T-cell (primary cell): ENCODE measurements at regions of chr1 and their contacts with region 1.

Region 1: DNA sequence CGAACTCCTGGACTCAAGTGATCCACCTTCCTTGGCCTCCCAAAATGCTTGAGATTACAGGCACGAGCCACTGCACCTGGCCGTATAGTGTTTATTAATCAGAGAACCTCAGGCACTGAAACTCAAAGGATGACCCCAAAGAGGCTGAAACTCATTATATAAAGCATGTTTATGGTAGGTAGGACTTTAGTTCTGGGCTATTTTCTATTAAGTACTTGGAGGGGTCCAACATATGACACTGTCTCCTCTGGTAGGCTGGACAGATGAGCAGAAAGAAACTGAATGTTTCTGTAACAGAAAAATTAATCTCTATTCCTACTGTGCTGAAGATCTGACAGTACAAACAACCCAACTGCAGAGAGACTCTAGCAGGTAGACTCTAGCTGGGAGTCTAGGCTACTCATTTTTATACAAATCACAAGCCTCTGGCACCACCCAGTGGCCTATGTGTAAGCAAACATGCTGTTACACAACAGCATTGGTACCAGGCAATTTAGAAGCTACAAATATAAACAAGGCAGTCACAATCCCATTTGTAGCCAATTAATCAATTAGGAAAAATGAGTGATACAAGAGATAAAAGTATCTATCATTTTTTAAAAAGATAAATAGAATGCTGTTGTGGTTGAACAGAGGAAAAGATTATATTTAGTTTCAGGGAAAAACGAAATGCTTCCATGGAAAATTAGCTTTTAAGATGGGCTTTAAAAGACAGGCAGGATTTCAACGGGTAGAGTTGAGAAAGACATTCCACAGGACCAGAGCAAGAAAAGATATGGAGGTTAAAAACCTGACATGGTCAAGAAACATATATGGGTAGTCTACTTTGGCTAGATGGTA is 10.4 kb downstream of the DCAF8 start:
- DNase-seq: peak; percentile 6 to 76 (median 55)
- ATAC-seq: peak; percentile 86 to 98 (median 90)
- H3K4me3 ChIP-seq: no peak overlapping the region
- H3K4me3 Mint-ChIP-seq: no peak overlapping the region
- H3K27ac ChIP-seq: no peak overlapping the region
- H3K27ac Mint-ChIP-seq: peak overlapping the region; percentile 3 to 67
- H3K4me1 ChIP-seq: no peaks in the 10 kb centered on the region
- H3K4me1 Mint-ChIP-seq: peaks cover 22 to 25% (median 23%) of the 10 kb centered on the region in 3 donors
- H3K27me3 ChIP-seq: no peaks in the 10 kb centered on the region
- H3K27me3 Mint-ChIP-seq: no peaks in the 10 kb centered on the region

Region 2: DNA sequence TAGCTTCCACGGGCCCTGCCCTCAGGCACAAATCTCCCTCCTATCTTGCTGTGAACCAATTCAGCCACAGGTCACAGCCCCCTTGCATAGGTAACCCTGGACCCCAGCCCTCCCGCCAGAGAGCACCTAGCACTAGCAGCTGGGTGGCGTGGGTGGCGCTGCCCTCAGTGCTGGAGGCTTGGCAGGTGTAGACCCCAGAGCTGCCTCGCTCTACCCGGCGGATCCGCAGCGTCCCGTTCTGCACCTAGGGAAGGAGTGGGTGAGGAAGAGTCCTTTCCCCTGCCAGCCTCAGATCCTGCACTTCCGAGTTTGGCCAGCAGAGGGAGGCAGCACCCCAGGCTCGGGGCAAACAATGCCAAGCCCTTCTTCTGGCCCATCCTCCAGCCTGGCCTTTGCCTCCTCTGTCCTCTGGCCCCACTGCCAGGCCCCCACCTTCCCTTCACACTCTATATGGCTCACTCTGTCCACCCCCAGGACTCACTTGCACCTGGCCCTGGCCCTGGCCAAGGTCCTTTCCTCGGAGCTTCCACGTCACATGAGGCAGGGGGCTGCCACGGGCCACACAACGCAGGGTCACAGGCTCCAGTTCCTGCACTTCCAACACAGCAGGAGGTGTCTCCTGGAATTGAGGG is 315.5 kb before region 1 on chr1:
- CTCF ChIA-PET with region 1: no interaction called
- POLR2A ChIA-PET with region 1: no interaction called
- DNase-seq: peak; percentile 29 to 88 (median 72)
- ATAC-seq: peak; percentile 77 to 85 (median 84)
- H3K4me3 ChIP-seq: no peak overlapping the region
- H3K4me3 Mint-ChIP-seq: no peak overlapping the region
- H3K27ac ChIP-seq: no peak overlapping the region
- H3K27ac Mint-ChIP-seq: no peak overlapping the region
- H3K4me1 ChIP-seq: peaks cover 4 to 17% of the 10 kb centered on the region in 2 experiments
- H3K4me1 Mint-ChIP-seq: peaks cover 0 to 12% (median 8%) of the 10 kb centered on the region in 3 donors
- H3K27me3 ChIP-seq: peaks cover 0 to 43% of the 10 kb centered on the region in 2 experiments
- H3K27me3 Mint-ChIP-seq: peaks cover 4 to 5% of the 10 kb centered on the region in 2 donors

Region 3: GRCh38 chr1:160085686-160086455 is 166.0 kb before region 1 on chr1:
- CTCF ChIA-PET with region 1: interaction called, 6 to 21 read pairs
- POLR2A ChIA-PET with region 1: no interaction called
- DNase-seq: peak; percentile 46 to 87 (median 71)
- ATAC-seq: peak; percentile 51 to 71 (median 62)
- H3K4me3 ChIP-seq: no peak overlapping the region
- H3K4me3 Mint-ChIP-seq: peak overlapping the region in 1 of 3 donors; percentile 24
- H3K27ac ChIP-seq: no peak overlapping the region
- H3K27ac Mint-ChIP-seq: peak overlapping the region in 1 of 2 donors; percentile 48
- H3K4me1 ChIP-seq: peaks cover 0 to 16% of the 10 kb centered on the region in 2 experiments
- H3K4me1 Mint-ChIP-seq: peaks cover 14 to 22% (median 19%) of the 10 kb centered on the region in 3 donors
- H3K27me3 ChIP-seq: peaks cover 6 to 29% of the 10 kb centered on the region in 2 experiments
- H3K27me3 Mint-ChIP-seq: peaks cover 8 to 20% of the 10 kb centered on the region in 2 donors

Region 4: GRCh38 chr1:160193091-160193819 is 58.7 kb before region 1 on chr1:
- CTCF ChIA-PET with region 1: interaction called, 12 to 21 read pairs
- POLR2A ChIA-PET with region 1: no interaction called
- DNase-seq: peak; percentile 35 to 86 (median 71)
- ATAC-seq: peak; percentile 80 to 89 (median 85)
- H3K4me3 ChIP-seq: no peak overlapping the region
- H3K4me3 Mint-ChIP-seq: no peak overlapping the region
- H3K27ac ChIP-seq: no peak overlapping the region
- H3K27ac Mint-ChIP-seq: no peak overlapping the region
- H3K4me1 ChIP-seq: peaks cover 0 to 8% of the 10 kb centered on the region in 2 experiments
- H3K4me1 Mint-ChIP-seq: no peaks in the 10 kb centered on the region
- H3K27me3 ChIP-seq: peaks cover 0 to 16% of the 10 kb centered on the region in 2 experiments
- H3K27me3 Mint-ChIP-seq: no peaks in the 10 kb centered on the region

Region 5: DNA sequence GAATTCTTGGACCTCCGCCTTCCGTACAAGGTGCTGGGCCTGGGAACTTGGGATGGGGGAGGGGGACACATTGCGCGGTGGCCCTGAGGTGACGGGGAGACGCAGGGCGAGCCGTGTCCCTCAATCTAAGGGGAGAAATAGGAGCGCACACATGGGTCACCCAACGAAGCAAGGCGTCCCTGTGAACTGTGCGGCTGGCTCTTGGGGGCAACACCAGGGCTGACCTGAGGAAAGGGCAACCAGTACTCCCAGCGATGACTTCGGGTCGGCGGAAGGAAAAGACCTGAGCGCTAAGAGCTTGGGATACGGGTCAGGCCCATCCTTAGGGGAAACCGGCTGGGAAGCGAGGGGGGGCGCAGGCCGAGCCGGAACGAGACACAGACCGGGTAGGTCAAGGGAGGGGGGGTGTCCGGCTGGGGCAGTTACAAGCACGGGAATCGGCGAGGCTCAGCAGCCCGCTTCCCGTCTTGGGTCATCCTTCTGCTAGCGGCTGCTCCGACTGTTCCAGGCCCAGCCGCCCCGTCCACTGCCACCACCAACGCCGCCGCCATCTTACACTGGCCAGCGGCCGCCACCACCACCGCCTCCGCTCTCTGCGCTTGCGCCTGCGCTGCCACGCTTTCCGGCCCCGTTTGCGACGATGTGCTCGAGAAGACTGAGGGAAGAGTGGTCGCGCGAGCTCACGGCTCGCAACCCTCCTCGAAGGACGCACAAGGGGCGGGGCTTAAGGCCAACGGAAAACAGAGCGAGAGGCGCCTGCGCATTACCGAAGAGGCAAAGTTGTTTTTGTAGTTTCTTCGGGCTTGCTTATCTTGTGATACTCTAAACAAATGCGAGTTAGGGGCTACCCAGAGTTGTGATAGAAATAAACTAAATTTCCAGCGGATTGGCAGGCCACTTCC is 10.2 kb after region 1 on chr1 and contains the start of gene DCAF8:
- CTCF ChIA-PET with region 1: interaction called, 4 to 43 read pairs
- POLR2A ChIA-PET with region 1: interaction called, 3 to 8 read pairs
- DNase-seq: peak; percentile 95 to 100 (median 98)
- ATAC-seq: peak; percentile 88 to 93 (median 92)
- H3K4me3 ChIP-seq: peak within 1 kb of the TSS; percentile 99
- H3K4me3 Mint-ChIP-seq: peak within 1 kb of the TSS; percentile 97 to 98 (median 97)
- H3K27ac ChIP-seq: peak within 1 kb of the TSS; percentile 99
- H3K27ac Mint-ChIP-seq: peak within 1 kb of the TSS; percentile 98 to 100
- H3K4me1 ChIP-seq: peaks cover 16 to 27% of the 10 kb centered on the region in 2 experiments
- H3K4me1 Mint-ChIP-seq: peaks cover 46 to 53% (median 50%) of the 10 kb centered on the region in 3 donors
- H3K27me3 ChIP-seq: no peaks in the 10 kb centered on the region
- H3K27me3 Mint-ChIP-seq: no peaks in the 10 kb centered on the region
- total RNA-seq, gene DCAF8: 173 to 221 (median 209) TPM

Region 6: GRCh38 chr1:160291248-160292220 is 39.6 kb after region 1 on chr1:
- CTCF ChIA-PET with region 1: interaction called, 7 to 23 read pairs
- POLR2A ChIA-PET with region 1: no interaction called
- DNase-seq: peak; percentile 27 to 87 (median 63)
- ATAC-seq: peak; percentile 95 to 97 (median 96)
- H3K4me3 ChIP-seq: no peak overlapping the region
- H3K4me3 Mint-ChIP-seq: no peak overlapping the region
- H3K27ac ChIP-seq: no peak overlapping the region
- H3K27ac Mint-ChIP-seq: peak overlapping the region; percentile 5 to 40
- H3K4me1 ChIP-seq: peaks cover 0 to 3% of the 10 kb centered on the region in 2 experiments
- H3K4me1 Mint-ChIP-seq: peaks cover 0 to 5% (median 2%) of the 10 kb centered on the region in 3 donors
- H3K27me3 ChIP-seq: no peaks in the 10 kb centered on the region
- H3K27me3 Mint-ChIP-seq: no peaks in the 10 kb centered on the region